ENCODE measurements at regions of chr1 and their contacts with region 1.

Region 1: DNA sequence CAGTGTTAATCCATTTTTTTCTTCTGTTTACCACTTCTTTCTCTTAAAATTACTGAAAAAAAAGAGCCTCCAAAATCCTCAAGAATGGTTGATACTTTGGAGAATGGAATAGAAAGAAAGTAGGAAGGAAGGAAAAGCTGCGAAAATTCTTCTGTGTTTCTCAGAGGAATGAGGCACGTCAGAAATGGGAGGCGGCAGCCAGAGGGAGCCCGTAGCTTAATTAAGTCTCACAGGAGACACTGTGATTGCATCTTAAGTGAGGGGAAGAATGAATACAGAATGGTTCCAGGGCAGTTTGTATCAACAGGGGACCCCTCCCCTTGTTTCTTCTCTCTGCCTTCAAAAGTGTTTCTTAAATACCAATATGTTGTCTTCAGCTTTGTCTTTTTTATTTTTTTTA is 1099.5 kb downstream of the PLA2G4A start:
- DNase-seq: peak; percentile 63
- H3K4me3 Mint-ChIP-seq: no peak overlapping the region
- H3K27ac Mint-ChIP-seq: no peak overlapping the region
- H3K4me1 Mint-ChIP-seq: peaks cover 13% of the 10 kb centered on the region
- H3K27me3 Mint-ChIP-seq: no peaks in the 10 kb centered on the region
- CTCF ChIP-seq: no peak

Region 2: DNA sequence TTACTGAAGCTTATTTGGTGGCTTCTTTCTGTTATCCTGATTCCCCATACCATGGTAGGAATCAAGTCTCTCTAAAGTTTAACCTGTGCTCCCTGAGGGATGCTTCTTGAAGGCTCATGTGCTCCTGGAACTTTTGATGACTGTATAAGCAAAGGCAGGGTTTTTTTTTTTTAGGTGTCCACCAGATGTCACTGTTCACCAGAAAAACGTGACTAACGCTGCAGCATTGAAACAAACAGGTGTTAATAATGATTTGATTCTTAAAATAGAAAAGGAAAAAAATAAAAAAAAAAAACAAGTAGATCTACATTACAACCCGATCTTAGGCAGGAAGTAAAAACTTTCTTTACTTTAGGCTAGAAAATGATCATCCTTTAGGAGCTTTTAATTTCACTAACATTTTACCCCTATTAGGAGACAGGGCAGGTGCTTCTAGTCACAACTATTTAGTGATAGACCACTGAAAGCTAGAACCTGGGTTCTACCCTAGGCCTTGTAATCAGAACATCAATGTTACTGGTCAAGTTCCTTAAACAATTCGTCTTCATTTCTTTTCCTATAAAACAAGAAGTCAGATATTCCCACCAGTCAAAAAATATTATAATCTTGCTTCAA is 876.6 kb before region 1 on chr1:
- CTCF ChIA-PET with region 1: no interaction called
- intact Hi-C with region 1: loop called (anchors 10 kb)
- DNase-seq: peak; percentile 61
- H3K4me3 Mint-ChIP-seq: no peak overlapping the region
- H3K27ac Mint-ChIP-seq: no peak overlapping the region
- H3K4me1 Mint-ChIP-seq: peaks cover 13% of the 10 kb centered on the region
- H3K27me3 Mint-ChIP-seq: no peaks in the 10 kb centered on the region
- CTCF ChIP-seq: peak; percentile 40

Region 3: GRCh38 chr1:187476671-187477070 is 451.6 kb before region 1 on chr1:
- CTCF ChIA-PET with region 1: no interaction called
- intact Hi-C with region 1: loop called (anchors 2 kb)
- DNase-seq: no peak
- H3K4me3 Mint-ChIP-seq: no peak overlapping the region
- H3K27ac Mint-ChIP-seq: no peak overlapping the region
- H3K4me1 Mint-ChIP-seq: peaks cover 8% of the 10 kb centered on the region
- H3K27me3 Mint-ChIP-seq: no peaks in the 10 kb centered on the region
- CTCF ChIP-seq: no peak

Region 4: DNA sequence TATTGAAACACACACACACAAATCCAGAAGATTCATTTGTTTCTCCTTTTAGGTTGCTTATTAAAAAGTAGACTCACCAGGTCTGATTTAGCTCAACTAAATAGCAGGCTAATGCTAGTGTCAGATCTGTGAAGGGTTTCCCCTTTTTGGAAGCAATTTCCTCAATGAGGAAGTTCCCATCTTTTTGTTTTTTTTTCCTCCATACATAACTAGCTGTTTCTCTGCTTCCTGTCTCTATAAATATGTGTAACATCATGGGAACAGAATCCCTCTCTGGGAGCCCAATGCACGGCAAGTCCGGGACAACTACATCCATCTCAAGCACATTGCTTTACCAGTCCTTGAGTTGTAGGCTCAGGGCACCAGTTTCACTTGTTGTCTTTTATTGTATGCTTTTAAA is 321.5 kb after region 1 on chr1:
- CTCF ChIA-PET with region 1: no interaction called
- intact Hi-C with region 1: no loop called
- DNase-seq: no peak
- H3K4me3 Mint-ChIP-seq: no peak overlapping the region
- H3K27ac Mint-ChIP-seq: no peak overlapping the region
- H3K4me1 Mint-ChIP-seq: peaks cover 8% of the 10 kb centered on the region
- H3K27me3 Mint-ChIP-seq: no peaks in the 10 kb centered on the region
- CTCF ChIP-seq: no peak

Region 5: DNA sequence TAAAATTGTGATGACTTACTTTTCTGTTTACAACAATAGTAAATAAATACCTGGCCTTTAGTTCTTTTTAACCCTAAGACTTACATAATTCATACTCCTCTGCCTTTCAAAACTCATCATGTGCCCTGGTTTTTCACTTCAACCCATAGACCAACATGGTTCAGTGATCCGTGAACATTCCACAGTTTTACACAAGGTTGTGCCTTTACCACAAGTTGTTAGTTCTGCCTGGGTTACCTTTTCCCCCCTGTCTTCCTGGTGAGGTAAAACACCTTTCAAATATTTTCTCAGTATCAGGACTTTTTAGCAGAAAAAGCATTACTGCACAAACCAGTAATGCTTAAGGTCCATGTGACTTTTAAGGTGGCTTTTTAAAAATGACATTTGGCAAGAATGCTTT is 366.9 kb after region 1 on chr1:
- CTCF ChIA-PET with region 1: no interaction called
- intact Hi-C with region 1: loop called (anchors 5 kb)
- DNase-seq: no peak
- H3K4me3 Mint-ChIP-seq: no peak overlapping the region
- H3K27ac Mint-ChIP-seq: no peak overlapping the region
- H3K4me1 Mint-ChIP-seq: no peaks in the 10 kb centered on the region
- H3K27me3 Mint-ChIP-seq: no peaks in the 10 kb centered on the region
- CTCF ChIP-seq: no peak

Region 6: DNA sequence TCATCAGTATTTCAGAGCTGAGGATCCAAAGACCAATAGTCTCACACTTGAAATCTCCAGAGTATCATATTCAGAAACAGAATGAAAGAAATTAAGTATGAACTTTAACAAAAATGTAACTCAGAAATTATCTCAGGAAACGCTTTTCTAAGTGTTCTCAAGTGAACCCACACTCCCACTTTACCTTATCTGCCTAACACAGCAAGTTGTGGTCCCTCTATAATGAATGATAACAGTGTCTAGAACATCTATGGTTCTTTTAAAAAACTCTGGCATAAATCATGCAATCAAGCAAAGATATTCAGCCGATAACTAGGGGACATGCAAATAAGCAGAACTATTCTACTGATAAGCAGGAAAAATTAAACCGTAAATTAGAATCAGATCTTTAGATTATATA is 474.7 kb after region 1 on chr1:
- CTCF ChIA-PET with region 1: no interaction called
- intact Hi-C with region 1: no loop called
- DNase-seq: no peak
- H3K4me3 Mint-ChIP-seq: no peak overlapping the region
- H3K27ac Mint-ChIP-seq: no peak overlapping the region
- H3K4me1 Mint-ChIP-seq: no peaks in the 10 kb centered on the region
- H3K27me3 Mint-ChIP-seq: no peaks in the 10 kb centered on the region
- CTCF ChIP-seq: no peak

Region 7: GRCh38 chr1:188715566-188715965 is 787.3 kb after region 1 on chr1:
- CTCF ChIA-PET with region 1: no interaction called
- intact Hi-C with region 1: loop called (anchors 10 kb)
- DNase-seq: peak; percentile 10
- H3K4me3 Mint-ChIP-seq: no peak overlapping the region
- H3K27ac Mint-ChIP-seq: no peak overlapping the region
- H3K4me1 Mint-ChIP-seq: peaks cover 8% of the 10 kb centered on the region
- H3K27me3 Mint-ChIP-seq: no peaks in the 10 kb centered on the region
- CTCF ChIP-seq: peak; percentile 46

Region 8: DNA sequence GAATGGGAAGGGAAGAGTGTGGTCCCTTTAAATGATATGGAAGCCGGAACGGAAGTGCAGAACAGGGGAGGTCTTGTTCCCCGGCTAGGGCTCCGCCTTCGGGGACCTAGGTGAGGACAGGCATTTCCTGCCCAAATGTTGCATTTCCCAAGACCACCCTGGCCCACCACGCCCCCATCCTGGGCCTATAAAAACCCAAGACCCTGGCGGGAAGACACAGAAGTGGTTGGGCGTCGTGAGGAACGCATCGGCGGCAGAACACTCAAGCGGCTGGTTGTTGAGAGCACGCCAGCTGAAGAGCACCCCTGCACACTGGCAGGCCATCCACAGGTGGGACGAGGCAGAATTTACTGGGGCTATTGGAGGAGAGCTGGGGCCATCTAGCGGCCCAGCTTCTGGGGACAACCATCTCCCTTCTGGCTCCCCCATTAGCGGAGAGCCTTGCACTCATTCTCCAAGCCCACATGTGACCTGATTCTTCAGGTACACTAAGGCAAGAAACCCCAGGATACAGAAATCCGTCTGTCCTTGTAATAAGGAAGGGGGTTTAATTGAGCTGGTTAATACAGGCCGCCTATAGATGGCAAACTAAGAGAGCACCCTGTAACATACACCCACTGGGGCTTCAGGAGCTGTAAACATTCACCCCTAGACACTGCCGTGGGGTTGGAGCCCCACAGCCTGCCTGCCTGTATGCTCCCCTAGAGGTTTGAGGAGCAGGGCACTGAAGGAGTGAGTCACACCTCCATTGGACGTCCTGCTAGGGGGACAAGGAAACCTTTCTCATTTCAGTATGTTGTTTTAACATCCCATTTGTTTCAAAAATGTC is 1221.5 kb after region 1 on chr1:
- CTCF ChIA-PET with region 1: no interaction called
- intact Hi-C with region 1: loop called (anchors 2 kb)
- DNase-seq: peak; percentile 86
- H3K4me3 Mint-ChIP-seq: peak overlapping the region; percentile 88
- H3K27ac Mint-ChIP-seq: peak overlapping the region; percentile 89
- H3K4me1 Mint-ChIP-seq: peaks cover 19% of the 10 kb centered on the region
- H3K27me3 Mint-ChIP-seq: no peaks in the 10 kb centered on the region
- CTCF ChIP-seq: peak; percentile 75

Measured in Calu3 (cell line).